MCF 10A (cell line): ENCODE measurements at regions of chr20 and their contacts with region 1.

Region 1: DNA sequence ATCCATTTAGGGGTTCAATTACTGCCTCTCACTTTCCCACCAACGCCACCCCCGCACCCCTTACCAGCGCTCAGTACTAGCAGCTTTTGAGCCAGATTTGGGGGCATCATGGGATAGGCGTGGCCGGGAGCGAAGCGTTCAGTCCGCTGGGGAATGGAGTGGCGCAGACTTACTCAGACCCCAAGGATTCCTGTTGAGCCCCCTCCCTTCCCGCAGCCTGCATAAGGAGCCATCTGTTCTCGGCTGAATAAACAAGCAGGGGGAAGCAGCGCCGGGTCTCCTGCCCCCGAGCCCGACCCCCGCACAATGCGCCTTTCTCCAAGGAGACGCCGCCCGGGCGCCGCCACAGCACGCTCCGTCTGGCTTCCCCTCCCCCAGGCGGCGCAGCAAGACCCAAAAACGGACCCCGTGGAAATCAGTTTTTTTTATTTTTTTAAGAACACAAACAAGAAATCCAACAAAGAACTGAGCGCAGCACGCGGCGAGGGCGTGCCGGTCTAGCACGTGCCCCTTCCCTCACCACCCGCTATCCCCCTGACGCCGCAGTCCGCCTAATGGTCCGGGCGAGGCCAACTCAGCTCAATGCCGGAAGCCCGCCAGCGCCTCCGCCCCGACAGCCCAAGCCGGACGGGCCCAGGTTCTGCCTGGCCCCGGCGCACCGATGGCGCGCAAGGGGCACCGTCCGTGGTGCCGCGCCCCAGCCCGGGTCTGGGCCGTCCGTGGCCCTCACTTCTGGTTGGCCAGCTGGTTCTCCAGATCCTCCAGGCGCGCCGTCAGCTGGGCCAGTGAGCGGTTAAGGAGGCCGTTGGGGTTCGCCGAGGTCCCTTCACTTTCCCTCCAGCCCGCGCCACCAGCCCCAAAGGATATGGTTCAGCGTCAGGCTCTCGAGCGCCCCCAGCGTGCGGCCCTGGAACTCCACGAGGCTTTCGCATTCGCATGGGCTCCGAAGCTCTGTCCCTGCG is 13.3 kb upstream of the RBPJL start:
- DNase-seq: peak; percentile 79
- H3K4me3 Mint-ChIP-seq: peak overlapping the region; percentile 64
- H3K27ac Mint-ChIP-seq: no peak overlapping the region
- H3K4me1 Mint-ChIP-seq: peaks cover 12% of the 10 kb centered on the region
- H3K27me3 Mint-ChIP-seq: no peaks in the 10 kb centered on the region
- CTCF ChIP-seq: peak; percentile 97

Region 2: DNA sequence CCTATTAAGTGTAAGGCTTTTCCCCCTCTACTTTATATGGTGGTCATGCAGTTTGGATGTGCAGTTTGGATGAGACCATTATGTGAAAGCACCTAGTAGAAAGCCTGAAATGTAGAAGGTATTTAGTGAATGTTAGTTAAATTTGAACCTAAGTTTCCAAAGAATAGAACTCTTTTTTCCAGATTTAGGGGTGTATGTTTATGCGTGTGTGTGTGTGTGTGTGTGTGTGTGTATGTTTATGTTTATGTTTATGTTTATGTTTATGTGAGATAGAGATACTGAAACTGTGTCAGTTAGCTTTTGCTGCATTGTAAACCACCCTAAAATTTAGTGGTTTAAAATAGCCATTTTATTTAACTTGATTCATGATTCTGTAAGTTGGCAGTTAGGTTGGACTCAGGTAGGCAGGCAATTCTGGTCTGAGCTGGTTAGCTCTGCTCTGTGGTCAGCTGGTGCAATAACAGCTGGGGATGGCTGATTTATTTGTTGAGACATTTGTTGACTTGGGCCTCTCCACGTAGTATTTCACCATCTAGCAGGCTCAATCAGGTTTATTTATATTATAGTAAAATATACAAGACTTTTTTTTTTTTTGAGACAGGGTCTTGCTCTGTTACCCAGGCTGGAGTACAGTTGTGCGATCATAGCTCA is 273.0 kb before region 1 on chr20:
- CTCF ChIA-PET with region 1: interaction called, 10 read pairs
- POLR2A ChIA-PET with region 1: no interaction called
- intact Hi-C with region 1: no loop called
- DNase-seq: peak; percentile 76
- H3K4me3 Mint-ChIP-seq: no peak overlapping the region
- H3K27ac Mint-ChIP-seq: peak overlapping the region; percentile 65
- H3K4me1 Mint-ChIP-seq: peaks cover 28% of the 10 kb centered on the region
- H3K27me3 Mint-ChIP-seq: no peaks in the 10 kb centered on the region
- CTCF ChIP-seq: no peak

Region 3: GRCh38 chr20:45080867-45081624 is 212.3 kb before region 1 on chr20:
- CTCF ChIA-PET with region 1: interaction called, 13 read pairs
- POLR2A ChIA-PET with region 1: no interaction called
- intact Hi-C with region 1: no loop called
- DNase-seq: peak; percentile 39
- H3K4me3 Mint-ChIP-seq: no peak overlapping the region
- H3K27ac Mint-ChIP-seq: no peak overlapping the region
- H3K4me1 Mint-ChIP-seq: no peaks in the 10 kb centered on the region
- H3K27me3 Mint-ChIP-seq: no peaks in the 10 kb centered on the region
- CTCF ChIP-seq: peak; percentile 33

Region 4: GRCh38 chr20:45128071-45128470 is 165.3 kb before region 1 on chr20:
- CTCF ChIA-PET with region 1: interaction called, 23 read pairs
- POLR2A ChIA-PET with region 1: interaction called, 8 read pairs
- intact Hi-C with region 1: loop called (anchors 5 kb)
- DNase-seq: peak; percentile 27
- H3K4me3 Mint-ChIP-seq: no peak overlapping the region
- H3K27ac Mint-ChIP-seq: no peak overlapping the region
- H3K4me1 Mint-ChIP-seq: no peaks in the 10 kb centered on the region
- H3K27me3 Mint-ChIP-seq: peaks cover 20% of the 10 kb centered on the region
- CTCF ChIP-seq: no peak

Region 5: GRCh38 chr20:45181639-45182038 is 111.7 kb before region 1 on chr20:
- CTCF ChIA-PET with region 1: interaction called, 14 read pairs
- POLR2A ChIA-PET with region 1: interaction called, 4 read pairs
- intact Hi-C with region 1: no loop called
- DNase-seq: no peak
- H3K4me3 Mint-ChIP-seq: no peak overlapping the region
- H3K27ac Mint-ChIP-seq: no peak overlapping the region
- H3K4me1 Mint-ChIP-seq: peaks cover 4% of the 10 kb centered on the region
- H3K27me3 Mint-ChIP-seq: no peaks in the 10 kb centered on the region
- CTCF ChIP-seq: no peak

Region 6: GRCh38 chr20:45275338-45275737 is 18.0 kb before region 1 on chr20:
- CTCF ChIA-PET with region 1: interaction called, 64 read pairs
- POLR2A ChIA-PET with region 1: interaction called, 3 read pairs
- intact Hi-C with region 1: no loop called
- DNase-seq: no peak
- H3K4me3 Mint-ChIP-seq: no peak overlapping the region
- H3K27ac Mint-ChIP-seq: no peak overlapping the region
- H3K4me1 Mint-ChIP-seq: no peaks in the 10 kb centered on the region
- H3K27me3 Mint-ChIP-seq: no peaks in the 10 kb centered on the region
- CTCF ChIP-seq: no peak